ENCODE measurements at regions of chr2 and their contacts with region 1.

Region 1: DNA sequence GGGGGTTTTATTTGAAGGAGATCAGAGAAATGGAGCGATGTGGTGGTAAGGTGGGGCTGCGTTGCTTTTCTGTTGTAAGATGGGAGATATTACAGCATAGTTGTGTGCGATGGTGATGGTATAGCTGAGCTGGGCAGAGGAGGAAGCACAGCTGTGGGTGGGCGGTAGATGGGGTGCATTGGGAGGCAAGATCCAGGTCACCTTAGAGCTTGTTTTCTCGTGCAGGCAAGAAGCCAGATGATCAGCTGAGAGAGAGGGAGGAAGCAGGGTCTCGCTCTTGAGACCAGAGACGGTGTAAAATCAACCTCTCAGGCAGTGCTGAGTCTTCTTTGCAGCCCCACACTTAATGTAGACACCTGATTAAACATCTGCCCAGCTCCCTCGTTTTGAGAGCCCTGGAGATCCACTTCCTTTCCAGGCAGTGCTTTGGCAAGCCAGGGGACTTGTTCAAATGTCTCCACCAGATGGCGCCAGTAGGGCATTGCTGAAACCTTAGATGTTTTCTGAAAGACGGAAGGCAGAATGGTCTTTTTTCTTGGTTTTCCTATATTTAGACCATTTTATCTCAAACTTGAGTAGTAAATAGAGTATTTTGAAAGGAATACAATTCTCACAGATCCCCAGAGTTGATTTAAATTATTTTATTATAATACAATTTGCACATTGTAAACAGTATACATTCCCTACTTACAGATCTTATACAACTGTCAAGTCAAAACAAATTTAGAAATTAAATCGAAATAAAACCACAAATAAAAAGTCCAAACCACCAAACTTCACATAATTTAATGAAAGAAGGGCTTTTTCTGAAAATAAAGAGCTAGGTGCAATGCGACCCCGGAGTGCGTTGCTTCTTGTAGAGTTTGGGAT is 21.1 kb upstream of the LYPD6B start:
- DNase-seq: peak; percentile 48 to 82 (median 66)
- ATAC-seq: peak; percentile 73
- H3K4me3 ChIP-seq: no peak overlapping the region
- H3K4me3 Mint-ChIP-seq: no peak overlapping the region
- H3K27ac ChIP-seq: no peak overlapping the region
- H3K27ac Mint-ChIP-seq: no peak overlapping the region
- H3K4me1 ChIP-seq: peaks cover 3% of the 10 kb centered on the region
- H3K4me1 Mint-ChIP-seq: no peaks in the 10 kb centered on the region
- H3K27me3 ChIP-seq: no peaks in the 10 kb centered on the region
- H3K27me3 Mint-ChIP-seq: no peaks in the 10 kb centered on the region
- CTCF ChIP-seq: peak; percentile 81

Region 2: GRCh38 chr2:149313512-149313972 is 296.2 kb after region 1 on chr2:
- CTCF ChIA-PET with region 1: no interaction called
- POLR2A ChIA-PET with region 1: no interaction called
- intact Hi-C with region 1: loop called in 1 of 2 experiments (anchors 5 kb)
- DNase-seq: peak in 3 of 14 experiments; percentile 6 to 17 (median 10)
- ATAC-seq: no peak
- H3K4me3 ChIP-seq: no peak overlapping the region
- H3K4me3 Mint-ChIP-seq: no peak overlapping the region
- H3K27ac ChIP-seq: no peak overlapping the region
- H3K27ac Mint-ChIP-seq: no peak overlapping the region
- H3K4me1 ChIP-seq: no peaks in the 10 kb centered on the region
- H3K4me1 Mint-ChIP-seq: peaks cover 5% of the 10 kb centered on the region
- H3K27me3 ChIP-seq: peaks cover 0 to 6% of the 10 kb centered on the region in 2 experiments
- H3K27me3 Mint-ChIP-seq: peaks cover 31% of the 10 kb centered on the region
- CTCF ChIP-seq: peak; percentile 56